GM18951 (cell line): ENCODE measurements at regions of chr6 and their contacts with region 1.

Region 1: DNA sequence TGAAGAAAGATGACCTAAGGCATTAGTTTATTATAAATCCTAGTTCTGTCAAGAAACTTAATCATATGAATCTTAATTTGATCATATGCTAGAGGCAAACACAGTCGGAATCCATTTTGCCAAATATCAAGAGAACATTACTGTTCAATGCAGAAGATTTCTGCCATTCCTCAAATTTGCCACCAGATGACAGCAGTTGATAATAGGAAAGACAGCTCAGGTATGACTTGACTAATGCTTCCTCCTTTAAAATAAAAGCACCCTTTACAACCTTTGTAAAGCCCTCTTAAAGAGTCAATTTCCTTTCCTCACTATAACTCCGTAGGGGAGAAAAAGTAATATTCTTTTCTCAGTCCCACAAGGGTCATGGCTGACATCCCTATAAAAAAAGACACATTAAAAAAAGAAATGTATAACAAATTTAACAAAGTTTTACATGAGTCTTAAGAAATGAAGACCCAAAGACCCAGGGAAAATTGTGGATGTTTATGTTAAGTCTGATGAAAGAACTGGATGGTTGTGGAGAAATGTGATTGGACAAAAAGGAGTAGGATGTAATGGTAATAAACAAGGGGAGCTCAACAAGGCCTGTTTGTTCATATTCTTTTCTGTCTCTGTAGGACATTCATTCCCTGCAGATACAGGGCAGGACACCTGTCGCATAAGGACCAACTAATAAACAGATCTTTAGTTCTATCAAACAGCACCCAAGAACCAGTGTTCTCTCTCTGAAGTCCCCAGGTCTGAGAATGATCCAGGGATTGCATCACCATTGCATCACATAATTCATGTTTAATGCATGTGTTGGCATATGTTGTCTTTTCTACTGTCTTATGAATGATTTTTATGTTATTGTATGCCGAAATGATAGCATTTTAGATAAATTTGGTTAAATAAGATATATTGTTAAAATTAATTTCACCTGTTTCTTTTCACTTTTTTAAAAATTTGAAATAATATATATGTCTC is 23.0 kb upstream of the IL17A start:
- POLR2A ChIP-seq: no peak

Region 2: GRCh38 chr6:51855310-51856082 is 307.7 kb before region 1 on chr6:
- in situ Hi-C with region 1: no loop called
- POLR2A ChIP-seq: no peak

Region 3: DNA sequence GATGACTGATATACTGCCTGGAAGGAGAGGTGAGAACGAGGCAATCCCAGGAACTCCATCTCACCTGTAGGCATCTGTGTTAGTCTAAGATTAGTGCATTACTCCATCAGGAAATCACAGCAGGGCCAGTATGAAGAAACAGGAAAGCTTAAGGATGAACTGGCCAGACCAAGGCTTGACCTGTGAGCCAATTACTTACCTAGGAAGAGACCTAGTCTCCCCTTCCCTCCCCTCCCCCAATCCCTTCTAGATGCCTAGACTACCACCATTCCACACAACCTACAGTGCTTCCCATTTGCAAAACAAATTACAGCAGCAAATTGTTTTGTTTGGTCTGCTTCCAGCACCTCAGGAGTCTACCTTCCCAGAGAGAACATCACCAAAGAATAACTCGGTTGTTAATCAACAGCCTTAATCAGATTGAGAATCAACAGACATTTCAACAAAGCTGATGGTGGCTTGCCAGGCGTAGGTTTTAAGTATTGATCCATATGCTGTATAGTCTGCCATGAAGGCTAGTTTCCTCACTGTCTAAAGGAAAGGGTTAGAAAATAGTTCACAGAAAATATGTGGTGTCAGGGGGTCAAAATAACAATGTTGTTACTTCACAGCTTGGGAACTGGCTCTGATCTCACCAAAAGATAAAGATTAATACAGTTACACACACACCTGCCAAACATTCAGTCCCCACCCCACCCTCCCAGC is 85.9 kb before region 1 on chr6:
- in situ Hi-C with region 1: no loop called
- POLR2A ChIP-seq: no peak

Region 4: GRCh38 chr6:52254731-52255378 is 91.6 kb after region 1 on chr6:
- in situ Hi-C with region 1: loop called (anchors 5 kb)
- POLR2A ChIP-seq: no peak

Region 5: DNA sequence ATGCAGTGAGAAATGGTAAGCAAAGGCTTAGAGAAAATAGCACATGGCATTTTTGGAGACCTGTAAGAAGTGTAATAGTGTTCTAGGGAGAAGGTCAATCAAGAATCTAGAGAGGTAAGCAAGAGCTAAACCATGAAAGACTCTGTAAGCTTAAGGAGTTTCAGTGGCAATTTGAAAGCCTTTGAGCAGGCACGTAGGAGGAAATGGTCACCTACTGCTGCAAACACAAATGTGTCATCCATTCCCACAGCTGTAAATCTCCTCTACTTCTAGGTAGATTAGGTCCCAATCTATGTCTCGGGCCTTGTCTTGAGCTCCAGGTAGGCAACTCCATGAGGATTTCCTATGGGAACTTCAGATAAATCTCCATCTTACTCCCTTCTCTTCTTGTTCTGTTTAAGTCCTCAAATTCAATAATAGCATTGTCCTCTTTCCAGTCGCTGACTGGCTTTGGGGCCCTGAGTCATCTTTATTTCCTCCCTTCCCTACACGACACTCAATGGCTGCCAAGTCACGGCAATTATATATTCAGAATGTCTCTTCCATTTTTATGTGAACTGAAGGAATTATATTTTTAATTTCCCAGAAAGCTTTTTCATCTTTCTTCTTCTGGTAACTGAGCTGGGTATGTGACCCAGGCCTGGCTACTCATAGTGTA is 174.5 kb after region 1 on chr6:
- in situ Hi-C with region 1: no loop called
- POLR2A ChIP-seq: no peak

Region 6: GRCh38 chr6:52399511-52400312 is 236.5 kb after region 1 on chr6:
- in situ Hi-C with region 1: loop called (anchors 25 kb)
- POLR2A ChIP-seq: no peak